ENCODE measurements at regions of chr14 and their contacts with region 1.

Region 1: DNA sequence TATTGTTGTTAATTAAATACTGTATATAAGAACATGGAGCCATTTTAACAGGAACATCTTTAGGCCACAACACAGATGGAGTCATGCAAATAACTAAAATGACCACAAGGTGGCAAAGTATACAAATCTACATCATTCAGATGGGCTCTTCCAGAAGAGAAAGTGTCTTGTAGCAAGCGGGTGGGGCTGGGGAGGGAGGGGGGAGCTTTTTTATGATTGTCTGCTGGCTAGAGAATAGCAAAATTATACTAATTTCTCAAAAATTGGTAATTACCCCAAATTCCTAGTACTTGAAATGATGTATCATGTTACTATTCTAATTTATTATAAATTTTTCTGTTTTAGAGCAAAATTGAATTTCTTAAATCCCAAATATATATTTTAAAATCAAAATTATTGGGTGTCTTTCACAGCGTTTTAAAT is 378.7 kb downstream of the PRKD1 start:
- DNase-seq: no peak

Region 2: DNA sequence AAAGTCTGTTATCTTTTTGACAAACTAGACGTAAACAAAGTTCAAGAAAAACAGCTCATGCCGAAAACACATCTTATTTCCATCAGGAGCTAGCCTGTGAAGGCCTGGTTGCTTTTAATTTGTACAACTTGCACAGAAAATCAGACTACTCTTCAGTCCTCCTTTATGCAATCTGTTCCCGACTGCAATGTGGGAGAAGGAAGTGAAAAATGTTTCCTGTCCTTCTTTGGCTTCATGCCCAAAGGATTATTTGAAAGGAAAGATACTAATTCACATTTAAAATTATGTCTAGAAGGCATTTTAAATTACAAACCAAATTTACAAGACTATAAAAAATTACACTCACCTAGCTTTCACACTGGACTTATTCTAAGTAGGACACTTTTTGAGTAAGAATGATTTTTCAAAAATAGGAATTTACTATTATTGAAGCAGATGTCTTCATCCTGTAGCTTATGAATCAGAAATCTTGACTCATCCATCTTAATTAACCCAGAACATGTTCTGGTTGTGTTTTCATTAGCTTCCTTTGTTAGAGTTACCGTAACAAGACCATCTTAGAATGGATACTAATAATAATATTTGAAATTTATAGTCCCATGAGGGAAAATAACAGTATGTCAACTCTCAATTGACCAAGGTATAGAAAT is 106.1 kb after region 1 on chr14:
- intact Hi-C with region 1: no loop called
- DNase-seq: no peak

Region 3: GRCh38 chr14:30002859-30003258 is 453.9 kb after region 1 on chr14:
- intact Hi-C with region 1: loop called (anchors 5 kb)
- DNase-seq: no peak

Region 4: DNA sequence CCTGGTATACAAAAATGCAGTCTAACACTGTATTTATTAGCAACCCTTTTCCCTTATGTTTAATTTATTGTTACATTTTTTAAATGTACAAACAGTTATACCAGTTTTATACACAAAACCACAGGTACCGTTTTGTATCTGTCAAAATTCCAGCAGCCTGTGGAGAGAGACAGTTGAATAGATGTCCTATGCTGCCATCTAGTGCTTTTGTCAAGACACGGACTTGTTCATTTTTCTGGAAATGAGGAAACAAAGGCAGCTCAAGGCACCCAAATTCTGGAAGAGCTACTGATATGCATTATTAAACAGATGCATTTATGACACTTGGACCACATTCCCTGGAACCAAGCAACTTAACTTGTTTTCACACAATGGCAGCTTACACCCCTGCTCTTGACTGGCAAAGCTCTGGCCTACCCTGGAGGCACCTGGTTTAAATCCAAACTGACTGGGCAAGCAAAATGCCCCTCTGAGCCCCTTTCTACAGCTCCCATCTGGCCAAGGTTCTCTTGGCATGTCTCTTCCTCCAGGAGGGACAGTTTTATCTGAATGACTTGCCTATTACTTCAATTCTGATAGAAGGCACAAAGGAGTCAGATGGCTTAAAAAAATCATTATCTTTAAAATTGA is 665.6 kb after region 1 on chr14:
- intact Hi-C with region 1: loop called in 1 of 2 experiments (anchors 5 kb)
- DNase-seq: no peak

Region 5: GRCh38 chr14:30223385-30223813 is 674.4 kb after region 1 on chr14:
- intact Hi-C with region 1: loop called in 1 of 2 experiments (anchors 10 kb)
- DNase-seq: no peak

Measured in posterior vena cava (tissue), 2 donors.